A549 (cell line): ENCODE measurements at regions of chr9 and their contacts with region 1.

Region 1: GRCh38 chr9:136728080-136728547 is 14.6 kb downstream of the LCN10 start:
- DNase-seq: peak; percentile 81 to 91
- ATAC-seq: peak; percentile 61 to 70
- H3K4me3 ChIP-seq: peak overlapping the region; percentile 91
- H3K27ac ChIP-seq: peak overlapping the region; percentile 99 to 100
- H3K4me1 ChIP-seq: peaks cover 41% of the 10 kb centered on the region
- CTCF ChIP-seq: peak; percentile 90
- EP300 ChIP-seq: no peak
- POLR2A ChIP-seq: peak; percentile 99
- RAD21 ChIP-seq: 0 out of 5 replicates have a peak, but pooled peaks of 1 of the 2 experiments have one; percentile 19

Region 2: DNA sequence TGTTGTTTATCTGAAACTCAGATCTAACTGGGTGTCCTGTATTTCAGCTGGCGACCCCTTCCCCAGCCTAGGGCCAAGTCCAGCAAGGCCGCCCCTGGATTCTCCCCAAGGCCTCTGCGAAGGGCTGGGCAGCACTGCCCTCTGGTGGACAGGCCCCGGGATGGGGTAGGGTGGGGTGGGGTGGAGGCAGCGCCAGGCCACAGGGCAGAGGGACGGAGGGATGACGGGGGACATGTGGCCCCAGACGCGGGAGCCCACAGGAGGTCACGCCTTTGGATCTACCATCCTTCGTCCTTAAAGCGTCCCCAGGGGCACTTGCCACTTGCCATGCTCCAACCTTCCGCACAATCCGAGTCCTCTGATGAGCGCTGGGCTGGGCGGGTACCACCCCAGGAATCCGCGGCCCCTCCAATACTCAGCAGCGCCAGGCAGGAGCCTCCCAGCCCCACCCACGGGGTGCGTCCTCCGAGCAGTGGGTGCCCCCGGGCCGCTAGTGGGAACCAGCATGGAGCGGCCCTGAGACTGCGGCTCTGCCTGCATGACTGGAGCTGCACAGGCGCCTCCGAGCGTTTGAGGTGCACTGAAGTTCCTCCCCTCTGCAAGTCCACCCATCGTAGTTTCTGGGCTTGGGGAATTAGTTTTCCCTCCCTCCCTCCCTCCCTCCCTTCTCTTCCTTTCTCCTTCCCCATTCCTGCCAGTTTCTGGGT is 33.7 kb before region 1 on chr9:
- CTCF ChIA-PET with region 1: interaction called, 24 read pairs
- POLR2A ChIA-PET with region 1: interaction called, 10 read pairs
- DNase-seq: peak; percentile 75 to 90
- ATAC-seq: peak; percentile 73 to 87
- H3K4me3 ChIP-seq: peak overlapping the region; percentile 19; the same call in 2 of the 3 replicates
- H3K27ac ChIP-seq: peak overlapping the region; percentile 73 to 87
- H3K4me1 ChIP-seq: peaks cover 78% of the 10 kb centered on the region
- CTCF ChIP-seq: peak; percentile 90
- EP300 ChIP-seq: no peak
- POLR2A ChIP-seq: no peak
- RAD21 ChIP-seq: peak; percentile 87 to 92

Region 3: GRCh38 chr9:136742591-136743391 is 14.7 kb after region 1 on chr9 and contains the start of gene LCN10:
- CTCF ChIA-PET with region 1: interaction called, 50 read pairs
- POLR2A ChIA-PET with region 1: interaction called, 11 read pairs
- DNase-seq: no peak
- ATAC-seq: peak; percentile 25 to 76; a peak in 5 of 6 replicates
- H3K4me3 ChIP-seq: no peak within 1 kb of the TSS
- H3K27ac ChIP-seq: no peak within 1 kb of the TSS
- H3K4me1 ChIP-seq: no peaks in the 10 kb centered on the region
- CTCF ChIP-seq: 0 out of 3 replicates have a peak, but pooled peaks have one; percentile 10
- EP300 ChIP-seq: no peak
- POLR2A ChIP-seq: no peak
- RAD21 ChIP-seq: no peak
- polyA plus RNA-seq, gene LCN10: not detected in 2 replicates

Region 4: GRCh38 chr9:136762915-136763648 is 35.0 kb after region 1 on chr9:
- CTCF ChIA-PET with region 1: interaction called, 42 read pairs
- POLR2A ChIA-PET with region 1: interaction called, 4 read pairs
- DNase-seq: peak; percentile 49 to 79
- ATAC-seq: peak; percentile 21 to 68; a peak in 4 of 6 replicates
- H3K4me3 ChIP-seq: no peak overlapping the region
- H3K27ac ChIP-seq: peak overlapping the region in 1 of 2 experiments; percentile 68; a peak in 3 of 6 replicates
- H3K4me1 ChIP-seq: peaks cover 16% of the 10 kb centered on the region
- CTCF ChIP-seq: no peak
- EP300 ChIP-seq: no peak
- POLR2A ChIP-seq: peak; percentile 22; the same call in 1 of the 2 replicates
- RAD21 ChIP-seq: no peak

Region 5: DNA sequence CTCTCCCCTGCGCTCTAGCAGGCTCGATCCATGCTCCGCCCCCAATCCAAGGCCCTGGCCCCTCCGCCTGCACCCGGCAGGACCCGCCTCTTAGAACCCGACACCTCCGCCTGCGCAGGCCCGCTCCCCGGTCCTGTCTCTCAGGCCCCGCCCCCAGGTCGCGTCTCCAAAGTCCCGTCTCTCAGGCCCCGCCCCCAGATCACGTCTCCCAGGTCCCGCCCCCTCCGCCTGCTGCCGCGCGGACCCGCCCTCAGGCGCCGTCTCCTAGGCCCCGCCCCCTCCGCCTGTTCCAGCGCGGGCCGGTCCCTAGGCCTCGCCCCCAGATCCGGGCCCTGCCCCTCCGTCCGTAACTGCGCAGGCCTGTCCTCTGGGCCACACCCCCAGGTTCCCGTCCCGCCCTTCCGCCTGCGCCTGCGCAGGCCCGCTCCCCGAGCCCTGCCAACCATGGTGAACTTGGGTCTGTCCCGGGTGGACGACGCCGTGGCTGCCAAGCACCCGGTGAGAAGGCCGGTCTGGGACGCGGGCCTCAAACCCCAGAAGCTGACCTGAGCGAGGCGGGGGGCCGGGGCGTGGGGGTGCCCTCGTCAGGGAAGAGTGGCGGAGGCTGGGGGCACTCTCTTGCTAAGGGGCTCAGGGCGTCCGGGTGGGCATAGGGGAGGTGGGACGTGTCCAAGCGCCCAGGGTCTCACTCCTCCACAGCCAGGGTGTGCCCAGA is 63.0 kb after region 1 on chr9 and contains the start of gene TMEM141:
- CTCF ChIA-PET with region 1: interaction called, 11 read pairs
- POLR2A ChIA-PET with region 1: interaction called, 7 read pairs
- DNase-seq: peak; percentile 90 to 100
- ATAC-seq: peak; percentile 85 to 90
- H3K4me3 ChIP-seq: peak within 1 kb of the TSS; percentile 88
- H3K27ac ChIP-seq: peak within 1 kb of the TSS; percentile 91 to 94
- H3K4me1 ChIP-seq: peaks cover 45% of the 10 kb centered on the region
- CTCF ChIP-seq: no peak
- EP300 ChIP-seq: no peak
- POLR2A ChIP-seq: peak; percentile 75
- RAD21 ChIP-seq: no peak
- polyA plus RNA-seq, gene TMEM141: 64.5 and 78.0 TPM in 2 replicates

Region 6: DNA sequence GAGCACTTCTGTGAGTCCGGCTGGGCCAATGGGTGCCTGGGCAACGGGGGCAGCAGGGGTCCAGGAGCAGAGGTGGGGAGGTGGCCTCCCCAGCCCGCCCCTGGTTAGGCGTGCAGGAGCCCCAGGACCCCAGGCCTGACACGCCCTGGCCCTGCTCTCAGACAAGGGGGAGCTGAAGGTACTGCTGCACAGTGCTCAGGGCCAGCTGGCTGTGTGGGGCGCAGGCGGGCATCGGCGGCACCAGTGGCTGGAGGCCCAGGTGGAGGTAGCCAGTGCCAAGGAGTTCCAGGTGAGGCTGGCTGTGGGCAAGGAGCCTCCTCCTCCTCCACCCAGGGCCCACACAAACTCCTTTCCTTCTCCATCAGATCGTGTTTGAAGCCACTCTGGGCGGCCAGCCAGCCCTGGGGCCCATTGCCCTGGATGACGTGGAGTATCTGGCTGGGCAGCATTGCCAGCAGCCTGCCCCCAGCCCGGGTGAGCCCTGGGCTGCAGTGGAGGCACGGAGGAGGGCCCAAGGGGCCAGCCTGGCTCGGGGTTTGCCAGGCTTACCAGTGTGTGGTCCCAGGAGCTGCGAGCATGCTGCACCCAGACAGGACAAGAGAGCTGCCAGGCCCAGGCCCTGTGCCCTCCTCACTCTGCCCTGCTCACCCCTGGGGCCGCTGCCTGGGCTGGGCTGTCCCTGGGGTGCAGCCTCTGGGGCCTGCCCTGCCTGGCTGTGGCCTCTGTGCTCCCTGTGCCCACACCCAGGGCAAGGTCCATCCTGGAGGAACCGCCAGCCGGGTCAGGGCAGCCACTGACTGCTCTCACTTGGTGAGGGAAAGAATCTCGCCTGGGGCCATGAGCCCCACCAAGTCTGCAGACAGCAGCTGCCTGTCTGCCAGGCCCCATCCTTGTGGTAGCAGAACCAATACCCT is 131.0 kb after region 1 on chr9:
- CTCF ChIA-PET with region 1: no interaction called
- POLR2A ChIA-PET with region 1: no interaction called
- DNase-seq: peak in 1 of 2 experiments; percentile 50
- ATAC-seq: peak; percentile 27 to 64
- H3K4me3 ChIP-seq: no peak overlapping the region
- H3K27ac ChIP-seq: peak overlapping the region; percentile 79 to 89
- H3K4me1 ChIP-seq: peaks cover 73% of the 10 kb centered on the region
- CTCF ChIP-seq: no peak
- EP300 ChIP-seq: no peak
- POLR2A ChIP-seq: 0 out of 2 replicates have a peak, but pooled peaks have one; percentile 2
- RAD21 ChIP-seq: no peak

Region 7: GRCh38 chr9:137045294-137046097 is 317.4 kb after region 1 on chr9:
- CTCF ChIA-PET with region 1: no interaction called
- POLR2A ChIA-PET with region 1: no interaction called
- DNase-seq: no peak
- ATAC-seq: peak; percentile 19 to 31
- H3K4me3 ChIP-seq: peak overlapping the region; percentile 71
- H3K27ac ChIP-seq: peak overlapping the region; percentile 77 to 92
- H3K4me1 ChIP-seq: peaks cover 15% of the 10 kb centered on the region
- CTCF ChIP-seq: no peak
- EP300 ChIP-seq: no peak
- POLR2A ChIP-seq: no peak
- RAD21 ChIP-seq: no peak